Activated CD4-positive, alpha-beta T cell treated with anti-CD3 and anti-CD28 coated beads, Interleukin-2, amount 10 ng/mL, durations not matched to agents 24 days and 14 days (primary cell): ENCODE measurements at regions of chr10 and their contacts with region 1.

Region 1: GRCh38 chr10:15097011-15097812 is at the start of gene RPP38:
- DNase-seq: peak; percentile 98
- H3K4me3 Mint-ChIP-seq: peak within 1 kb of the TSS; percentile 95
- H3K27ac Mint-ChIP-seq: peak within 1 kb of the TSS; percentile 92
- H3K4me1 Mint-ChIP-seq: peaks cover 20% of the 10 kb centered on the region
- H3K27me3 Mint-ChIP-seq: peaks cover 2% of the 10 kb centered on the region
- total RNA-seq, gene RPP38: 22.6 and 23.3 TPM in 2 replicates

Region 2: DNA sequence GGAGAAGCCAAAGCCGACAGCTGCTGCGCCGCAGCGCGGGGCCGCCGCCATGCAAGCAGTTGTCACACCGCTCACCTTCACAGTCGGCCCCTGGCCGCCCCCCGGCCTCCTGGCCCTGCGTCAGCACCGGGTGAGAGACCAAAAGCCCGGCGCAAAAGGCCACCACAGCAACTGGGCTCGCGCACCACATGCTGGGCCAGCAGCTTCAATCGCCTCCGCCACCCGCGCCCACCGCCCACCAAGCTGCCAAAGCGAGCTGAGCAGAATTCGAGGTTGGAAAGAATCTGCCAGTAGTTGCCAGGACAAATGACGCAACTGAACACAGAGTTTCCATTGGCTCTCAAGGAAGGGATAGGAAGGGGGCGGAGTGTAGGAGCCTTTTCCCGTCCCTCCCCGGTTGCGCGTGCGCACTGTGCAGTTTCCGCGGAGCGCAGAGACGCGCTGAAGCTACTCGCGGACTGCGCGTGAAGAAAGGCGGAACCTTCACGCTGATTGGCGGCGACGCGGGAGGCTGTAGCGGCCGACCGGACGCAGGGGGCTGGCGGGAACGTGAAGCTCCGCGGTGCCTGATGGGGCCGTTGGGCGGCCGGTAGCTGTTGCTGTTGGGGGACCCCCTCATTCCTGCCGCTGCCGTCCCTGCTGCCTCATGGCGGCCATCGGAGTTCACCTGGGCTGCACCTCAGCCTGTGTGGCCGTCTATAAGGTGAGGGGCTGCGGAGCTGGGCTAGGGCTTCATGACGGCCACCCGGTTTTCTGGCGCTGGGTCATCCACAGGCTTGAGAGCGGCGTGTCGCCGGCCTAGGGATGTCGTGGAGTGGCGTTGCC is 259.2 kb before region 1 on chr10 and contains the starts of genes CDNF, HSPA14 and MSANTD7:
- intact Hi-C with region 1: loop called (anchors 2 kb)
- DNase-seq: peak; percentile 100
- H3K4me3 Mint-ChIP-seq: peak within 1 kb of the TSS; percentile 92
- H3K27ac Mint-ChIP-seq: peak within 1 kb of the TSS; percentile 96
- H3K4me1 Mint-ChIP-seq: peaks cover 18% of the 10 kb centered on the region
- H3K27me3 Mint-ChIP-seq: no peaks in the 10 kb centered on the region
- total RNA-seq, gene CDNF: 0.62 and 0.70 TPM in 2 replicates
- total RNA-seq, gene HSPA14: 42.0 and 44.1 TPM in 2 replicates
- total RNA-seq, gene MSANTD7: 28.9 and 30.3 TPM in 2 replicates

Region 3: GRCh38 chr10:14954001-14954770 is 143.0 kb before region 1 on chr10 and contains the start of gene DCLRE1C:
- intact Hi-C with region 1: loop called (anchors 1 kb)
- DNase-seq: peak; percentile 97
- H3K4me3 Mint-ChIP-seq: peak within 1 kb of the TSS; percentile 96
- H3K27ac Mint-ChIP-seq: peak within 1 kb of the TSS; percentile 97
- H3K4me1 Mint-ChIP-seq: peaks cover 45% of the 10 kb centered on the region
- H3K27me3 Mint-ChIP-seq: no peaks in the 10 kb centered on the region
- total RNA-seq, gene DCLRE1C: 17.5 and 21.0 TPM in 2 replicates

Region 4: DNA sequence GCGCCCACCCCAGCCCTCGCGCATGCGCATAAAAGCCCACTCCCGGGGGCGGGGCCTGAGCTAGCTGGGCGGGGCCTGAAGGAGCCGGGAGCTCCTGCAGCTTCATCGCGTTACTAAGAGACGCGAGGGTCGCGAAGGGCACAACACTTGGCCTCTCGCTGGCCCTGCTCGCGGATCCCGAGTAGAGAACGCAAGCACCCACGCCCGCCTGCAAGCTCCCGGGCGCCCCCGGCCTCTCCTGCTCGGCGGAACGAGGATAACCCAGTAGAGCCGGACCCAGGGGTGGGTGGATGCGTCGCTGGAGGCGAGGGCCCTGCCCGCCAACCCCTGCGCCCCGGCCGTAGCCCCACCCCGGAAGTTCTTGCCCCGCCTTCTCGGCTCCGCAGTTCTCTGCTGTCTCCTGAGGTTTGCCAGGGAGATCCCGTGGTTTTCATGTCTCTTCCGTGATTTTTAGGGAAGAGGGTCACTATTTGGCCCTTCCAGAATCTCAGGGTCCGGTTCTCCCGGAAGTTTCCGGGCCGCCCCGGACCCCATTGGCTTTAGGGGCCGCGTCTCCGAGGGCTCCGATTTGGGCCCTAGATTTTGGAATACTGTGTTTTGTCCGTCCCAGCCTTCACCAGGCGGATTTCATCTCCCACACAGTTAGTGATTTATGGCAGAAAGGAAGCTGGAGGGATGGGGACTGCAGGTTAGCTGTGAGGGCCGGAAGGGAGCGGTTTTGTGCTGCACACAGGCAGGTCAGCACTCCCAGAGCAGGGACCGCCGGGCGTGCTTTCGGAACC is 137.7 kb before region 1 on chr10 and contains the start of gene MEIG1:
- intact Hi-C with region 1: loop called (anchors 1 kb)
- DNase-seq: peak; percentile 98
- H3K4me3 Mint-ChIP-seq: peak within 1 kb of the TSS; percentile 93
- H3K27ac Mint-ChIP-seq: peak within 1 kb of the TSS; percentile 96
- H3K4me1 Mint-ChIP-seq: peaks cover 17% of the 10 kb centered on the region
- H3K27me3 Mint-ChIP-seq: no peaks in the 10 kb centered on the region
- total RNA-seq, gene MEIG1: not detected in 2 replicates

Region 5: GRCh38 chr10:15112657-15113056 is 15.4 kb after region 1 on chr10:
- intact Hi-C with region 1: no loop called
- DNase-seq: no peak
- H3K4me3 Mint-ChIP-seq: no peak overlapping the region
- H3K27ac Mint-ChIP-seq: no peak overlapping the region
- H3K4me1 Mint-ChIP-seq: peaks cover 3% of the 10 kb centered on the region
- H3K27me3 Mint-ChIP-seq: no peaks in the 10 kb centered on the region

Region 6: DNA sequence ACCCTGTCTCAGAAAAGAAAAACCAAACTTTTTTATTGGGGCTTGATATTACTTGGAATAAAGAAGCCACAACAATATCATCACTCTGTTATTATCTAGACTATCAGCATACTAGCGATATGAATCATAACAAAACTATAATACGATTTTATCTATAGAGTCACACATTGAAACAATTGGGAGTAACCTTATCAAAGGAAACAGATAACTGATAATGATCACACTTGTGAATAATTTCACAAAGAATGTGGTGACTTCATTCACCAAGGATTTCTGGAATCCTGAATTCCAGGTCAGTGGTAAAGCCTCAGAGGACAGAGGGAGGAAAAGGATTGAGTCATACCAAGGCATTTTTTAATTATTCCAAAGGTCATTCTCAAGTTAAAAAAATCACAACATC is 103.4 kb after region 1 on chr10:
- intact Hi-C with region 1: no loop called
- DNase-seq: no peak
- H3K4me3 Mint-ChIP-seq: no peak overlapping the region
- H3K27ac Mint-ChIP-seq: no peak overlapping the region
- H3K4me1 Mint-ChIP-seq: peaks cover 41% of the 10 kb centered on the region
- H3K27me3 Mint-ChIP-seq: no peaks in the 10 kb centered on the region

Region 7: GRCh38 chr10:15370856-15371701 is 273.9 kb after region 1 on chr10 and contains the start of gene FAM171A1:
- intact Hi-C with region 1: loop called (anchors 5 kb)
- DNase-seq: peak; percentile 89
- H3K4me3 Mint-ChIP-seq: peak within 1 kb of the TSS; percentile 78
- H3K27ac Mint-ChIP-seq: peak within 1 kb of the TSS; percentile 26
- H3K4me1 Mint-ChIP-seq: peaks cover 8% of the 10 kb centered on the region
- H3K27me3 Mint-ChIP-seq: peaks cover 62% of the 10 kb centered on the region
- total RNA-seq, gene FAM171A1: 1.7 TPM in 2 replicates